ENCODE measurements at regions of chr16 and their contacts with region 1.

Region 1: GRCh38 chr16:1991948-1992703 is 2.4 kb downstream of the SYNGR3 start:
- DNase-seq: peak; percentile 91
- H3K4me3 Mint-ChIP-seq: peak overlapping the region; percentile 82
- H3K27ac Mint-ChIP-seq: no peak overlapping the region
- H3K4me1 Mint-ChIP-seq: peaks cover 26% of the 10 kb centered on the region
- H3K27me3 Mint-ChIP-seq: peaks cover 11% of the 10 kb centered on the region

Region 2: GRCh38 chr16:1288611-1289474 is 703.3 kb before region 1 on chr16:
- intact Hi-C with region 1: no loop called
- DNase-seq: no peak
- H3K4me3 Mint-ChIP-seq: no peak overlapping the region
- H3K27ac Mint-ChIP-seq: no peak overlapping the region
- H3K4me1 Mint-ChIP-seq: no peaks in the 10 kb centered on the region
- H3K27me3 Mint-ChIP-seq: peaks cover 21% of the 10 kb centered on the region

Region 3: GRCh38 chr16:1959269-1960049 is 32.7 kb before region 1 on chr16 and contains the start of gene NDUFB10:
- intact Hi-C with region 1: loop called (anchors 1 kb)
- DNase-seq: peak; percentile 93
- H3K4me3 Mint-ChIP-seq: peak within 1 kb of the TSS; percentile 97
- H3K27ac Mint-ChIP-seq: peak within 1 kb of the TSS; percentile 90
- H3K4me1 Mint-ChIP-seq: peaks cover 34% of the 10 kb centered on the region
- H3K27me3 Mint-ChIP-seq: no peaks in the 10 kb centered on the region
- total RNA-seq, gene NDUFB10: 134 and 138 TPM in 2 replicates

Region 4: DNA sequence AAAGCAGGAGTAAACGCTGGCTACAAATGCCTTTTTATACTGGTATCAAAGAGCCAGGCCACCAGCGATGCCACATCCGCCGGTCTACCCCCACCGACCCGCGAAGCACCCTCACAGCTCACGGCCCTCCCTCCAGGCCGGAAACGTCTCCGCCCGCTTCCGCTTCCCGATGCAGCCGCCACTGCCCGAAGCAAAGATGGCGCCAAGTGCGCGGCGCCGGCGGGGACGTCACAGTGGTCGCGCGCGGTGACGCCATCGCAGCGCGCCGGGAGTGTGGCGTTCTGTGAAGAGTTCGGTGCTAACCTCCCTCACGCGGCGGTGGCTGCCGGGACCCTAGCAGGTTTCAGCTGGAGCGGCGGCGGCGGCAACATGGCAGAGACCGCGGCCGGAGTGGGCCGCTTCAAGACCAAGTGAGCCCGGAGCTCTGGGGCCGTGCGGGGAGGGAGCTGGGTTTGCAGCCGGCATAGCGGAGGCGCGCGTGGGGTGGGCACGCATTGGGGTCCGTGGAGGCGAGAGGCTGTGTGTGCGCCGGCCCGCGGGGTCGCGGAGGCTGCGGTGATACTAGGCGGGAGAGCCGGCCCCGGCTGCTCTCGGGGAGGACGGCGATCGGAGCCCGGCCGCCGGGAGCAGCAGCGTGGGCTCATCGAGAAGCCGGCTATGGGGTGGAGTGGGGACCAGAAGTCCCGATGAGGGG is 20.2 kb before region 1 on chr16 and contains the start of gene TBL3:
- intact Hi-C with region 1: loop called (anchors 1 kb)
- DNase-seq: peak; percentile 97
- H3K4me3 Mint-ChIP-seq: peak within 1 kb of the TSS; percentile 97
- H3K27ac Mint-ChIP-seq: peak within 1 kb of the TSS; percentile 99
- H3K4me1 Mint-ChIP-seq: peaks cover 19% of the 10 kb centered on the region
- H3K27me3 Mint-ChIP-seq: no peaks in the 10 kb centered on the region
- total RNA-seq, gene TBL3: 84.9 and 87.3 TPM in 2 replicates

Region 5: GRCh38 chr16:2003827-2004641 is 11.9 kb after region 1 on chr16:
- intact Hi-C with region 1: loop called (anchors 1 kb)
- DNase-seq: peak; percentile 84
- H3K4me3 Mint-ChIP-seq: no peak overlapping the region
- H3K27ac Mint-ChIP-seq: no peak overlapping the region
- H3K4me1 Mint-ChIP-seq: peaks cover 19% of the 10 kb centered on the region
- H3K27me3 Mint-ChIP-seq: no peaks in the 10 kb centered on the region

Region 6: DNA sequence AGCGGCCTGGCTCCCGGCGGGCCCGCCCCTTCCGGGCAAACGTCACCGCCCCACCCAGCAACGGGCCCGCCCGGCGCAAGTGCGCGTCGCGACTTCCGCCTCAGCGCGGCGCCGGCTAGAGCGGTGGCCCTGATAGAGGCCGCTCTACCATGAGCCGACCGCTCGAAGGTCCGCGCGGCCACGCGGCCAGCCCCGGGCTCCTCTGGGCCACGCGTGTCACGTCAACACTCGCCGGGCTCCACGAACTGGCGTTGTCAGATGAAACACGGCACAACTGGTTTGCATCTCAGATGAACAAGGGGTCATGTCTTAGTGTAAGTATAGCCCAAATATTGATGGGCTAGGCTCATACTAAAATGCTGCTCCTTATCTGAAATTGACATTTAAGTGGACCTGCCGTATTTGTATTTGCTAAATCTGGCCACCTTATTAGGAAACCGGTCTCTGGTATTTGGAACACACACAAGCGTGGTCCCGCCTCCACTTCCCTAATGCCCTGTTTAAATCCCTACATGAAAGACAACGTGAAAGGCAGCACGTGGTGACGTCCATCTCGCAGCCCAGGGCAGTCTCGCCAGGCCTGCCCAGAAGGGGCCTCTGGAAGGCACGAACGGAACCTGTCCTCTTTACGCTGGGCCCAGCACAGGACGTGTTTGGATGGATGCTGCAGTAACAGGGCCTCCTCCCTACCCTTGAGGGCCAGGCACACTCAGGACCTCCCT is 17.8 kb after region 1 on chr16 and contains the start of gene ZNF598:
- intact Hi-C with region 1: loop called (anchors 1 kb)
- DNase-seq: peak; percentile 77
- H3K4me3 Mint-ChIP-seq: peak within 1 kb of the TSS; percentile 92
- H3K27ac Mint-ChIP-seq: peak within 1 kb of the TSS; percentile 87
- H3K4me1 Mint-ChIP-seq: peaks cover 26% of the 10 kb centered on the region
- H3K27me3 Mint-ChIP-seq: no peaks in the 10 kb centered on the region
- total RNA-seq, gene ZNF598: 100 and 105 TPM in 2 replicates

Region 7: GRCh38 chr16:2047330-2048115 is 55.4 kb after region 1 on chr16 and contains the starts of genes NTHL1 and TSC2:
- intact Hi-C with region 1: loop called (anchors 1 kb)
- DNase-seq: peak; percentile 95
- H3K4me3 Mint-ChIP-seq: peak within 1 kb of the TSS; percentile 93
- H3K27ac Mint-ChIP-seq: peak within 1 kb of the TSS; percentile 83
- H3K4me1 Mint-ChIP-seq: peaks cover 21% of the 10 kb centered on the region
- H3K27me3 Mint-ChIP-seq: no peaks in the 10 kb centered on the region
- total RNA-seq, gene NTHL1: 50.0 and 52.7 TPM in 2 replicates
- total RNA-seq, gene TSC2: 96.4 and 111 TPM in 2 replicates

Measured in activated T-helper 1 cell treated with anti-CD3 and anti-CD28 coated beads, Interleukin-12 subunit alpha, Interleukin-12 subunit beta, Interleukin-2, Interleukin-4 antibody, amounts not matched to agents 30 ng/mL and 10 ng/mL and 1 ng/mL, durations not matched to agents 14 hours and 24 hours and 36 hours (primary cell).